ENCODE measurements at regions of chr1 and their contacts with region 1.

Region 1: GRCh38 chr1:210400043-210400840 is 71.5 kb downstream of the HHAT start:
- DNase-seq: peak; percentile 63
- ATAC-seq: peak; percentile 85
- H3K4me3 Mint-ChIP-seq: no peak overlapping the region
- H3K27ac Mint-ChIP-seq: no peak overlapping the region
- H3K4me1 Mint-ChIP-seq: peaks cover 13% of the 10 kb centered on the region
- H3K27me3 Mint-ChIP-seq: peaks cover 7% of the 10 kb centered on the region

Region 2: GRCh38 chr1:210143465-210144062 is 256.7 kb before region 1 on chr1:
- CTCF ChIA-PET with region 1: interaction called, 15 read pairs
- POLR2A ChIA-PET with region 1: no interaction called
- DNase-seq: peak; percentile 63
- ATAC-seq: no peak
- H3K4me3 Mint-ChIP-seq: no peak overlapping the region
- H3K27ac Mint-ChIP-seq: no peak overlapping the region
- H3K4me1 Mint-ChIP-seq: no peaks in the 10 kb centered on the region
- H3K27me3 Mint-ChIP-seq: peaks cover 4% of the 10 kb centered on the region

Region 3: DNA sequence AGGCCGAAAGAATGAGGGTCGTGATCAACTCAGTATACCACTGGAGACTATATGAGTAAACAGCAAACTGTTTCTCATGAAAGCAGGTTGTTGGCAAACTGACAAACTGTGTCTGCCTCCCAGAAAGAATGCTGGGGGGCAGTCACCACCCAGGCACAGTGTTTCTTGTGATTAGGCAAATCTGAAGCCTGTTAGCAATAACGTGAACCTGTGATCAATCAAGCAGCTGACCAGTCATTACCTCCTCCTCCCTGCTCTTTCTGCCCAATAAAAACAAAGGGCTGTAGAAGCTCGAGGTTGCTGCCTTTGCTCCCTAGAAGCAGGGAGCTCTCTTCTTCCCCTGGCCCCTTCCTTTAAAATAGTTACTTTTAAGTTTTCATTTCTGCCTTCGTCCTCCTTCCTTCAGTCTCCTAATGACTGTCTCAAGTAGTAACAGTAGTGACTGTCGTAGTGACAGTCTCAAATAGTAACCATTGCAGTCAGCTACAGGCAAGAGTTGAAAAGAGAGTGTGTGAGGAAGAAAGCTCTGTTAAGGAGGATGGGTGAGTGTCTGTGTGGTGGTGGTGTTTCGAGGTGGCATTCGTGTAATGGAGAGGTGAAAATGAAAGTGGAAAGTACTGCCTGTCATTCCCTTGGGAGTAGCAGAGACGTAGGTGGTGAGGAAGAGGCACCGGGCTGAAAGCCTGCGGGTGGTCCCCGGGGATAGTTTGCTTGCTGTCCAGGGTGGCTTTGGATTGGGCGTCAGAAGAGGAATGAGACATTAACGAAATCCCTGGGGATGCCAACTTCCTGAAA is 57.1 kb before region 1 on chr1:
- CTCF ChIA-PET with region 1: interaction called, 17 read pairs
- POLR2A ChIA-PET with region 1: no interaction called
- DNase-seq: no peak
- ATAC-seq: no peak
- H3K4me3 Mint-ChIP-seq: no peak overlapping the region
- H3K27ac Mint-ChIP-seq: no peak overlapping the region
- H3K4me1 Mint-ChIP-seq: peaks cover 33% of the 10 kb centered on the region
- H3K27me3 Mint-ChIP-seq: no peaks in the 10 kb centered on the region

Region 4: DNA sequence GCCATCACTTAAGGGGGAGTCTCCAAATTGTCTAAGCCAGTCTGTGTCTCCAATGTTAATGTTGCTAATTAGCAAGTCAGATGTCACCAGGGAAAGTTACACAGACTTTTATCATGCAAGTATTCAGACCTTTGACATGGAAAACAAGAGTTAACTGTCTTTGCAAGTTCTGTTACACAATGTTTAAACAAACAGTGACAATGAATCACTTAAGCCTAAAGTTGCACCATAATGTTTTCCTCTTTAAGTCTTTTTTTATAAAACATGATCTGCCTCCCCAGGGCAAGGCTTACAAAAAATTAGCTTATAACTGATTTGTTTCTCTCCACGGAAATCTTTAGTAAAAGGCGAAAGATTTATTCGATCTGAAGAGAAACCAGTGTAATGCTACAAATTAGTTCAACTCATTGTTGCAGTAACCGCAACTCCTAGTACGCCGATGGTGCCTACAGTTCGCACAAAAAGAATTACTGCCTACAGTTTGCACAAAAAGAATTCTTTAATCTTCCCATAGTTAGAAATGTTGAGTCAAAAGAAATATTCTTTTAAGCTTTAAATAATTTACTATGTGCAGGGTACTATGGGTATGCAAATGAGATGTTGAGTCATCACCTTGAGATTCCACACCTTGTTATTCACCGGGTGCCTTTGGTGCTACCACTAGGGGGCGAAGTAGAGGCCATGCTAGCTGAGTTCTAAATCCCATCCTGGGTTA is 26.2 kb before region 1 on chr1:
- CTCF ChIA-PET with region 1: interaction called, 51 read pairs
- POLR2A ChIA-PET with region 1: interaction called, 20 read pairs
- DNase-seq: peak; percentile 74
- ATAC-seq: peak; percentile 69
- H3K4me3 Mint-ChIP-seq: no peak overlapping the region
- H3K27ac Mint-ChIP-seq: peak overlapping the region; percentile 27
- H3K4me1 Mint-ChIP-seq: peaks cover 6% of the 10 kb centered on the region
- H3K27me3 Mint-ChIP-seq: no peaks in the 10 kb centered on the region

Region 5: DNA sequence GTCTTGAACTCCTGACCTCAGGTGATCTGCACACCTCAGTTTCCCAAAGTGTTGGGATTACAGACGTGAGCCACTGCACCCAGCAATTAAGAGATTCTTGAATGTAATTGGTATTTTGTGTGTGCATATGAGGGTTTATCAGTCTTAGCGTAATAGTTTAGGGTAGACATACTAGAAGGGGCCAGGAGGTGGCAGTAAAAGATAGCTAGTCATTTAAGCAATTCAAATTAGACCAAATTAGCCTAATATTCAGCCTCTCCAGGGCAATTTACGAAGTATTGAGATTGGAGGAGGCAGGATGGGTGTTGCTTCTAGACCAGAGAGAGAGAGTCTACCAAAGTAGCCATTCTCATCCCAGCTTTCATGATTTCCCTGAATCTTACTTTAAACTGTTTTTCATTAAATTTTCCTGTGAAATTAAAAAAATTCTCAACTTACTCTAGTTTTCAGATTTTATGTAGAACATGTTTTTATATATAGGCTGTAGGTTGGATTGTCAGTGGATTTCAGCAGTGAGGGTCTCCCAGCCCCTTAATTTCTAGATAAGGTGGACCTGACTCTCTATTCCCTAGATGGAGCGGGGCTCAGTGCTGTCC is 48.2 kb after region 1 on chr1:
- CTCF ChIA-PET with region 1: interaction called, 23 read pairs
- POLR2A ChIA-PET with region 1: no interaction called
- DNase-seq: peak; percentile 49
- ATAC-seq: no peak
- H3K4me3 Mint-ChIP-seq: no peak overlapping the region
- H3K27ac Mint-ChIP-seq: no peak overlapping the region
- H3K4me1 Mint-ChIP-seq: peaks cover 18% of the 10 kb centered on the region
- H3K27me3 Mint-ChIP-seq: peaks cover 2% of the 10 kb centered on the region

Region 6: DNA sequence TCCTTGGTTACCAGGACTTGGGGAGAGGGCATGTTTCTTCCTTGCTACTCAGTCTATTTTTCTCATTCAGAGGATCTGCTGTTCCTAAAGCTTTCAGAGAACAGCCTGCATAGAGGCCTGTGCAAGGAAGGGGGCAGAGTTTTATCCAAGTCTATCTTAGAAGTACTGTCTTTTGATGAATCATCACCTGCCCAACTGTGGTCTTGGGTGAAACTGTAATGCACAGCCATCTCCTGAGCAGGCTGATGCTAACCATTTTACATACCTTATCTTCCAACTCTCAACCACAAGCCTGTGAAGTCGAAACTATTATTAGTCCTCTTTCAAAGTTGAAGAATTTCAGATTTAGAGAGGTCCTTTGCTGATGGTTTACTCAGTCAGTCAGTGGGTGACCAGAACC is 296.5 kb after region 1 on chr1:
- CTCF ChIA-PET with region 1: no interaction called
- POLR2A ChIA-PET with region 1: no interaction called
- DNase-seq: peak; percentile 66
- ATAC-seq: peak; percentile 83
- H3K4me3 Mint-ChIP-seq: no peak overlapping the region
- H3K27ac Mint-ChIP-seq: peak overlapping the region; percentile 47
- H3K4me1 Mint-ChIP-seq: peaks cover 39% of the 10 kb centered on the region
- H3K27me3 Mint-ChIP-seq: no peaks in the 10 kb centered on the region